Cardiac septum (tissue), 1 donor: ENCODE measurements at regions of chr21 and their contacts with region 1.

Region 1: DNA sequence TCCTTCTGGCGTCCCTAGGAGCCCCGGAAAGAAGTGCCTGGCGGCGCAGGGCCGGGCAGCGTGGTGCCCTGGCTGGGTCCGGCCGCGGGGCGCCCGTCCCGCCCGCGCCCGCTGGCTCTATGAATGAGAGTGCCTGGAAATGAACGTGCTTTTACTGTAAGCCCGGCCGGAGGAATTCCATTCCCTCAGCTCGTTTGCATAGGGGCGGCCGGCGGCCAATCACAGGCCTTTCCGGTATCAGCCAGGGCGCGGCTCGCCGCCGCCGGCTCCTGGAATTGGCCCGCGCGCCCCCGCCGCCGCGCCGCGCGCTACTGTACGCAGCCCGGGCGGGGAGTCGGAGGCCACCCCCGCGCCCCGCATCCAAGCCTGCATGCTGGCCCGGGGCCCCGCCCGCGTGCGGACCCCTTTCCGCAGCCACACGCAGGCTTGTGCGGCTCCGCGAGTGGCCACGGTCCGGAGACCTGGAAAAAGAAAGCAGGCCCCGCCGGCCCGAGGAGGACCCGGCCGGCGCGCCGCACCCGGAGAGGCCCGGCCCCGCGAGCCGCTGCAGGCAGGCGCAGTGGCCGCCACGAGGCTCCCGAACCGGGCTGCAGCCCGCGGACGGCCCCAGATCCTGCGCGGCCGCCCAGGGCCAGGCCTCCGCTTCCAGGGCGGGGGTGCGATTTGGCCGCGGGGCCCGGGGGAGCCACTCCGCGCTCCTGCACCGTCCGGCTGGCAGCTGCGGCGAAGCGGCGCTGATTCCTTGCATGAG is 160.4 kb downstream of the RUNX1 start:
- DNase-seq: peak; percentile 96

Region 2: GRCh38 chr21:34745557-34746255 is 143.0 kb before region 1 on chr21:
- intact Hi-C with region 1: loop called (anchors 5 kb)
- DNase-seq: peak; percentile 83

Region 3: DNA sequence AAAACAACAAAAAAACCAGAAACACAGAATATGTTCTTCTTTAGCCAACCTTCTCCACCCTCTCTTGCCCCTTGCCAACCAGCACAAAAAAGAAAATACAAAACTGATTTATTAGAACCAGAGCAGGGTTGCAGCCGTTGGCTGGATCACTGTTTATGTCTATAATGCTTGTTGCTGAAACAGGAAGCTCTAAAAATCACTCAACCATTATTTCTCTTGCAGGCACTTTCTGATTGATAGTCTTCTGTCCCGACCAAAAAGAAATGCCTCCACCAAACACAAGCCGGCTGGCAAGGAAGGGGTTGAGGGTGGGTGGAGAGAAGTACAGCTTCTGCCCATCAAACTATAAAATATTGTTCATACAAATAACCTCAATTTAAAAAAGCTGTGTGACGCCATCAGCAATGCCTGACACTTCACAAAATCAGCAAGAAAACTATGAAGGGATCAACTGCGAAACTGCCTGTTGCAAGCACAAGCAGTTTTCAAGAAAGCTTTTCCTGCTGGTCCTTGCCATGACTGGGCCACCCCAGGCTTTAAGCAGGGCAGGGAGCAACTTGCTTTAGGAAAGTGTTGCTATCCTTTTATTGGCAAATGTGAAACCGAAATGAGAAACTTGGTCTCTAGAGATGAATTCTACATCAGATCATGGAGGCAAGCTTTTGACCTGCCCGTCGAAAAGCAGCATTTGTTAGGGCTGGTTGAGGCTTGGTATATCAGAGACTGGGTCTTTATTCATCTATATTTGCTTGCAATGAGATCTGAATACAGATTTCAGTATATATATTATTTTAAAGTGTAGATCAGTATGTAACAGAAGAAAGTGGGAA is 13.8 kb before region 1 on chr21:
- intact Hi-C with region 1: no loop called
- DNase-seq: no peak

Region 4: DNA sequence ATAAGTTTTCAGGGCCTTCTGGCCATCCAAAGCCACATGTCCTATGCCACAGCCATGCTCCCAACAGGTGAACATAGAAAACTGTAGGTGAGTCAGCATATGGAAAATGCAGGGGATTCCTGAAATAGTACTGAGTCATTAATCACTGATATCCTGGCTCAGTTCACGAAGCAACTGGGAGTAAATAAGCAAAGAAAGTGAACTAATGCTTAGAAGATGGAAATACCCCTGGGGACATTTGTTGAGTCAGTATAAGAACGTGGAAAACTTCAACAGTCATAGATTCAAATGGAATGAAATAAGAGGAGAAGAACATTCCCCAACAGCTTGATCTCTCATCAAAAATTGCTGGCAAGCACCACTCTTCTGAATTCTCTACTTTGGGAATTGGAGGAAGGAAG is 309.3 kb after region 1 on chr21:
- intact Hi-C with region 1: loop called (anchors 2 kb)
- DNase-seq: no peak

Region 5: GRCh38 chr21:35234725-35235124 is 346.0 kb after region 1 on chr21:
- intact Hi-C with region 1: no loop called
- DNase-seq: no peak

Region 6: DNA sequence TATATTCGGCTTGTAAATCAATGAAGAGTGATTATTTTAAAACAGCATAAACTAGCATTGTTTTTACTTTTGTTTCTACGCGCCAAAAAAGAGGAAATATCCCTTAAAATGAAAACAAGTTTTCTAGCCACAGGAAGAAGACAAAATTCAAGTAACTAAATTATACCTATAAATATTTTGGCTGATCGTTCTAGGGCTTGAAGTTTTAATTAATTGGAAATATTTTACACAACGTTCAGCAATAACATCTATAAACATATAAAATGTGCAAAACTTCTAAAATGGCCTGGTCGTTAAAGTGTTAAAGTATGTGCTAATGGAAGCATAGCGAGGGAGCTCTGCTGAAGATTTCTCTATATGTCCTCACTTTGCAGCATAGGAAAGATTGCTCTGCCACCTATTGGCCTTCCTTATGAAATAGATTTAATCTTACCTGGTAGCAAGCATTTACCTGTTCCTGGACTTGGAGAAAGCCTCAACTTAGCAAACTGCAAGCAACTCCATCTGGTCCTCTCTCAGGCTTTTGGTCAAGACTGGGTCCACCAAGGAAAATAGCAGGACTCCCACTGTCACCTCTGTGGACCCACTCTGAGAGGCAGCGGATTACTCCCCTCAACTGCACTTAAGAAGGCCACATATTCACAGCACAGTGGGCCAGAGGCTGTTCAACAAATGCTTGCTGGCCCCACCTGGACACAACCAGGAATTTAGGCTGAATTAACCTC is 511.7 kb after region 1 on chr21:
- intact Hi-C with region 1: loop called (anchors 5 kb)
- DNase-seq: no peak

Region 7: DNA sequence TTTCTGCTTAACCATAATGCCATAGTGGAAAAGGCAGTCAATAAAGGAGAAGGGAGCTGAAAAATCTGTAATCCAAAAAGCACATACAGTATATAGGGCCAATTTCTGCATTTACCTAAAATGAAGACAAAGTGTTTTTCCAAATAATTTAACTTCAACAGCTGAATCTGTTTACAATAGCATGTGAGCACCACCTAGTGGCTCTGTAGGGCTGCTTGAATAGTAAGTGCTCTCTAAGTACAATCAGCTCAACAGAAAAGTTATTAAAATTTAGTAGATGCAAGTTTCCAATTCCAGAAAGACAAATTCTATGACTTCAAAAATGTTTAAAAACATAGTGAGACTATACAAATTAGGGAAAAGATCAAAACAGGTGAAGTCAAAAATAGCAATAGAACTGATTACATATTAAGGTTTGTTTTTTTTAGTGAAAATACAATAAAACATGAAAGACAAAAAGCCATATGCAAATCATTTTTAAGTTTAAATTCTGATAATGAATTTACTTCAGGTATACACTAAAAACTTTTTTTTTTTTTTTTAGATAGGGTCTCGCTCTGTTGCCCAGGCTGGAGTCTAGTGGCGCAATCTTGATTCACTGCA is 951.6 kb after region 1 on chr21:
- intact Hi-C with region 1: loop called (anchors 5 kb)
- DNase-seq: no peak